ENCODE measurements at regions of chr4 and their contacts with region 1.

Region 1: GRCh38 chr4:36278789-36279188 is 2.6 kb upstream of the DTHD1 start:
- DNase-seq: peak; percentile 96
- H3K4me3 ChIP-seq: no peak overlapping the region
- H3K27ac ChIP-seq: peak overlapping the region; percentile 67
- H3K4me1 ChIP-seq: peaks cover 24% of the 10 kb centered on the region
- H3K27me3 ChIP-seq: no peaks in the 10 kb centered on the region
- CTCF ChIP-seq: no peak

Region 2: DNA sequence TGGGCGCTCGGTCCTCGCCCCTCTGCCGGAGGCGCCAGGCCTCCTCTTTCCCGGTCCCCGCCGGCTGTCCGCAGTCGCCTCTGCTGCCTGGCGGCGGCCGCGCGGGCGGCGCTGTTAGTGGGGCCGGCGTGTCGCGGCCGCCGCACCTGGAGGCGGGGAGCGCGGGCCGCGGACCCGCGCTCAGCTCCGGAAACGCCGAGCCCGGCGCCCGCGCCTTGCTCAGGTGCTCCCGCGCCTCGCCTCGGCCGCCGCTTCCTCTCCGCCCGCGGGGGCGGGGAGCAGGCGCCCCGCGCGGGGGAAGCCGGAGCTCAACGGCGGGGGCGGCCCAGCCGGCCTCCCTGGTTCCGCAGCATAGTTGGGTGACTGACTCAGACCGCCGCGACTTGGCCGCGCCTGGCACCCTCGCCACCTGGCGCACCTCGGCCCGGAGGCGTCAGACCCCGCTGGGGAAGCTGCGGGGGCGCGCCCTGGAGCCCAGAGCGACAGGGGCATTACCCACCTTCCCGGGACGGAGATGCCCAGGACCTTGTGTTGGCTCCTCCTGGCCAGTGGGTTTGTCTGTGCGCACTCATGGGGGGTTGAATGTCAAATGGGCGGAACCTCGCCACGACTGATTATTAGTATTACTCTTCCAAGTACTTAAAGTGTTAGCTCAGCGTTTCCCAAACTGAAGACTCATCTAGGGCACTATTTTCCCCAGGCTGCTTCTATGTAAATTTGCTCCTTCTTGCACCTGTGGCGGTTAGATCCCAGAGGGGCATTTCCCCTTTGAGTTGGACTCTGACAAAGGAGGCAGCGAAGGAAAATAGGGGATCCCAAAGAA is 34.3 kb before region 1 on chr4 and contains the start of gene ARAP2:
- CTCF ChIA-PET with region 1: no interaction called
- dilution Hi-C with region 1: no loop called
- in situ Hi-C with region 1: no loop called
- intact Hi-C with region 1: loop called (anchors 5 kb)
- DNase-seq: peak; percentile 77
- H3K4me3 ChIP-seq: peak within 1 kb of the TSS; percentile 77 to 86 (median 80)
- H3K27ac ChIP-seq: peak within 1 kb of the TSS; percentile 55
- H3K4me1 ChIP-seq: peaks cover 7% of the 10 kb centered on the region
- H3K27me3 ChIP-seq: no peaks in the 10 kb centered on the region
- CTCF ChIP-seq: peak in 1 of 2 donors; percentile 6
- total RNA-seq, gene ARAP2: 13.1 to 25.2 TPM

Measured in mammary epithelial cell (primary cell).